ENCODE measurements at regions of chr10 and their contacts with region 1.

Region 1: DNA sequence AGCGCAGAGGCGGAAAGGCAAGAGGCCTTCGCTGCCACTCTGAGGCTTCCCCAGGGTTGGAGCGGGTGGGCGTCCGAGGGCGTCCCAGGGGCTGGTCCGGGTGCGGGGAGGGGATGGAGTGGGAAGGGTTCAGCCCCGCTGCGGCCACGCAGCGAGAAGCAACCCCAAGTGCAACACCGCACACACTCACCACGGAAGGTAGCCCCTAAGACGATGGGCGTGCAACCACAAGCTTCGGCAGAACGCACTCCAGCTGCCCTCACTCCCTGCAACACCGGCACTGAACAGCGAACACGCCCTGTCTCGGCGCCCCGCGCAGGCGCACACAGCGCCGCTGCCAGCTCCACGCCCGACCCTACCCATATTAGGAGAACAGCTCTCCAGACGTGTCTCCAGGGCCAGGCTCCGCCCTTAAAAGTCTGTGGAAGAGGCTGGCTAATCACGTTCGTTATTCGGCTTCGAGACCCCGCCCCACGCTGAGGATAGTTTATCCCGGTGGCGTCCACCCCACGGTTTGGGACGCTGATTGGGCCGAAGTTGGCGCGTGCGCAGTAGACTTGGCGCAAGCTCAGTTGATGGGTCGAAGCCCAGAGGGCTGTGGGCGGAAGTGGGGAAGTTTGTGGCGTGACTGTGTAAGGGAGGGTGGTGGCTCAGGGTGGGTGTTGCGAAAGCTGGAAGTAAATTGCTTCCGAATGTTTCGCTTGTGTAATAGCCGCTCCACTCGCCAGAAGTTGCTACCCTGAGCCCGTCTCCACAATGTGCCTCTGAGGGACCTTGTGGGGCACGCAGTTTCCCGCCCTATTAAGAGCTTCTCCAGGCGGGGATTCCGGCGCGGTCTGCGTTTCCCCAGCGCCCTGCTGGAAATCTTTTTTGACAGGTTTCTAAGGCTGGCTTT is at the start of gene RSU1:
- DNase-seq: peak; percentile 98
- ATAC-seq: peak; percentile 97
- H3K4me3 ChIP-seq: peak within 1 kb of the TSS; percentile 78 to 79
- H3K27ac ChIP-seq: peak within 1 kb of the TSS; percentile 54
- H3K4me1 ChIP-seq: peaks cover 3 to 18% of the 10 kb centered on the region in 2 experiments; a peak in 3 of 4 replicates
- H3K27me3 ChIP-seq: no peaks in the 10 kb centered on the region
- CTCF ChIP-seq: no peak
- POLR2A ChIP-seq: no peak
- RAD21 ChIP-seq: no peak
- total RNA-seq, gene RSU1: 29.5 TPM

Region 2: GRCh38 chr10:16436758-16437539 is 380.4 kb before region 1 on chr10 and contains the start of gene PTER:
- CTCF ChIA-PET with region 1: no interaction called
- POLR2A ChIA-PET with region 1: no interaction called
- RAD21 ChIA-PET with region 1: no interaction called
- intact Hi-C with region 1: loop called (anchors 2 kb)
- DNase-seq: peak; percentile 89
- ATAC-seq: peak; percentile 96
- H3K4me3 ChIP-seq: peak within 1 kb of the TSS; percentile 62 to 67
- H3K27ac ChIP-seq: peak within 1 kb of the TSS; percentile 70
- H3K4me1 ChIP-seq: peaks cover 19 to 43% of the 10 kb centered on the region in 2 experiments
- H3K27me3 ChIP-seq: no peaks in the 10 kb centered on the region
- CTCF ChIP-seq: no peak
- POLR2A ChIP-seq: peak; percentile 72
- RAD21 ChIP-seq: no peak
- total RNA-seq, gene PTER: 25.8 TPM

Region 3: GRCh38 chr10:16520900-16521299 is 296.5 kb before region 1 on chr10:
- CTCF ChIA-PET with region 1: no interaction called
- POLR2A ChIA-PET with region 1: no interaction called
- RAD21 ChIA-PET with region 1: no interaction called
- intact Hi-C with region 1: no loop called
- DNase-seq: no peak
- ATAC-seq: no peak
- H3K4me3 ChIP-seq: no peak overlapping the region
- H3K27ac ChIP-seq: no peak overlapping the region
- H3K4me1 ChIP-seq: no peaks in the 10 kb centered on the region
- H3K27me3 ChIP-seq: no peaks in the 10 kb centered on the region
- CTCF ChIP-seq: no peak
- POLR2A ChIP-seq: no peak
- RAD21 ChIP-seq: no peak

Measured in HCT116 (cell line).